Activated CD4-positive, alpha-beta T cell treated with anti-CD3 and anti-CD28 coated beads, Interleukin-2, amount 10 ng/mL, durations not matched to agents 7 days and 5 days (primary cell): ENCODE measurements at regions of chr1 and their contacts with region 1.

Region 1: GRCh38 chr1:204446370-204447111 is 34.9 kb upstream of the PPP1R15B start:
- DNase-seq: peak; percentile 84
- H3K4me3 Mint-ChIP-seq: no peak overlapping the region
- H3K27ac Mint-ChIP-seq: peak overlapping the region; percentile 76
- H3K4me1 Mint-ChIP-seq: peaks cover 43% of the 10 kb centered on the region
- H3K27me3 Mint-ChIP-seq: no peaks in the 10 kb centered on the region

Region 2: DNA sequence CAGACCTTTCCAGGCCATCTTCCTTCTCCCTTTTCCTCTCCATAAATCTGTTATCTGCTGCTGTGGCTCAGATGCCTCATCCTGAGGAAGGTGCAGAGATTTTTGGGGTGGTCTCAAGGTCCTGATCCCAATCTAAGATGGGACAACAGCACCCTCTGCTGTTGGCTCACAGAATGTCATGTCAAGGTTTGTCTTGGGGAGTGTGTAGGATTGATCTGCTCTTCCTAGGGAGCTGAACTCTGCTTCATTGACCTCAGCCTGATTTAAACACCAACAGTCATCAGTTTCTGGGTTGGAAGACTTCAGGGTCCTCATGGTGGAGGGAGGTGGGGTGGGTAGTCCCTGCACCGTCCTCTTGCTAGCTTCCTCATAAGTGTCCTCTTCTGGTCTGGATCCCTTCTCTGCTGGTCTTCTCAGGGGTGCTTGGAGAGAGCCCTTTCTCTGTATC is 744.4 kb before region 1 on chr1:
- CTCF ChIA-PET with region 1: no interaction called
- POLR2A ChIA-PET with region 1: no interaction called
- DNase-seq: peak; percentile 63
- H3K4me3 Mint-ChIP-seq: no peak overlapping the region
- H3K27ac Mint-ChIP-seq: peak overlapping the region; percentile 42
- H3K4me1 Mint-ChIP-seq: peaks cover 28% of the 10 kb centered on the region
- H3K27me3 Mint-ChIP-seq: no peaks in the 10 kb centered on the region

Region 3: GRCh38 chr1:204254031-204254661 is 192.4 kb before region 1 on chr1:
- CTCF ChIA-PET with region 1: no interaction called
- POLR2A ChIA-PET with region 1: no interaction called
- DNase-seq: no peak
- H3K4me3 Mint-ChIP-seq: no peak overlapping the region
- H3K27ac Mint-ChIP-seq: no peak overlapping the region
- H3K4me1 Mint-ChIP-seq: no peaks in the 10 kb centered on the region
- H3K27me3 Mint-ChIP-seq: no peaks in the 10 kb centered on the region

Region 4: DNA sequence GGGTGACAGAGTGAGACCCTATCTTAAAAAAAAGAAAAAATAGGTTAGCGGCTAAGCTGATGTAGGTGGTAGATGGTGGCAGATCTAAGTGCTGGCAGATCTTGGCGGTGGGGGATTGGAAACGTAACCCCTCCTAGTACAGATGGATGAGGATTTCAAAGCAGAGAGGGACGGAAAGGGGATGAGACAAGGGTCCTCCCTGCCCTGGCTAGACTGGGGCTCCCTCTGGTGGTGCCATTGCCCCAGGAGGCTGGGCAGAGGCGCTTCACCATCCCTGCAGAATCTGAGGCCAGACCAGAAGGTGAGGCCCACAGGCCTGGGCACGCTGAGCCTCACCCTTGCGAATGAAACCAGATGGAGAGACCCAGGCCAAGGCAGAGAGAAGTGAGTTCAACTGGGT is 79.8 kb before region 1 on chr1:
- CTCF ChIA-PET with region 1: no interaction called
- POLR2A ChIA-PET with region 1: no interaction called
- DNase-seq: no peak
- H3K4me3 Mint-ChIP-seq: no peak overlapping the region
- H3K27ac Mint-ChIP-seq: no peak overlapping the region
- H3K4me1 Mint-ChIP-seq: peaks cover 11% of the 10 kb centered on the region
- H3K27me3 Mint-ChIP-seq: peaks cover 2% of the 10 kb centered on the region

Region 5: GRCh38 chr1:204431310-204432165 is 15.0 kb before region 1 on chr1:
- CTCF ChIA-PET with region 1: interaction called, 12 read pairs
- POLR2A ChIA-PET with region 1: no interaction called
- DNase-seq: peak; percentile 83
- H3K4me3 Mint-ChIP-seq: no peak overlapping the region
- H3K27ac Mint-ChIP-seq: no peak overlapping the region
- H3K4me1 Mint-ChIP-seq: no peaks in the 10 kb centered on the region
- H3K27me3 Mint-ChIP-seq: no peaks in the 10 kb centered on the region

Region 6: GRCh38 chr1:204465546-204466415 is 19.2 kb after region 1 on chr1:
- CTCF ChIA-PET with region 1: interaction called, 102 read pairs
- POLR2A ChIA-PET with region 1: interaction called, 6 read pairs
- DNase-seq: no peak
- H3K4me3 Mint-ChIP-seq: no peak overlapping the region
- H3K27ac Mint-ChIP-seq: no peak overlapping the region
- H3K4me1 Mint-ChIP-seq: peaks cover 47% of the 10 kb centered on the region
- H3K27me3 Mint-ChIP-seq: no peaks in the 10 kb centered on the region

Region 7: DNA sequence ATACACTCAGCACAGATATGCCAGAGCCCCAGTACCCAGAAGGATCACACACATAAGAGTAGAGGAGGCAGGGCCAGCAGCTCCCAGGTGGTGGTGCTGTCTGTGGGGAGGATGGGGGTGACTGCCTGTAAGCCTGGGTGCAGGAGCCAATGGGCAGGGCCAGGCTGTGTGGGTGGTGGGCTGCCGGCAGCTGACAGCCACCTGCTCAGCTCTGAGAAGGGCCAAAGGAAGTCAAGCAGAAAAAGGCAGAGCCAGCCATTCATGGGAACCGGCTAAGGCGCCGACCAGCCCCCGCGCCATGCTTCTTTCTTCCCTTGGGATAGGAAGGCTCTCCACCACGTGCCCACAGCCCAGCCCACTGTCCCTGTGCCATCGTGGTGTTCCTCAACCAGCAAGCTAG is 34.0 kb after region 1 on chr1:
- CTCF ChIA-PET with region 1: interaction called, 17 read pairs
- POLR2A ChIA-PET with region 1: no interaction called
- DNase-seq: no peak
- H3K4me3 Mint-ChIP-seq: no peak overlapping the region
- H3K27ac Mint-ChIP-seq: no peak overlapping the region
- H3K4me1 Mint-ChIP-seq: peaks cover 26% of the 10 kb centered on the region
- H3K27me3 Mint-ChIP-seq: no peaks in the 10 kb centered on the region

Region 8: GRCh38 chr1:204487256-204487615 is 40.7 kb after region 1 on chr1:
- CTCF ChIA-PET with region 1: interaction called, 31 read pairs
- POLR2A ChIA-PET with region 1: interaction called, 4 read pairs
- DNase-seq: no peak
- H3K4me3 Mint-ChIP-seq: no peak overlapping the region
- H3K27ac Mint-ChIP-seq: no peak overlapping the region
- H3K4me1 Mint-ChIP-seq: peaks cover 22% of the 10 kb centered on the region
- H3K27me3 Mint-ChIP-seq: no peaks in the 10 kb centered on the region

Region 9: DNA sequence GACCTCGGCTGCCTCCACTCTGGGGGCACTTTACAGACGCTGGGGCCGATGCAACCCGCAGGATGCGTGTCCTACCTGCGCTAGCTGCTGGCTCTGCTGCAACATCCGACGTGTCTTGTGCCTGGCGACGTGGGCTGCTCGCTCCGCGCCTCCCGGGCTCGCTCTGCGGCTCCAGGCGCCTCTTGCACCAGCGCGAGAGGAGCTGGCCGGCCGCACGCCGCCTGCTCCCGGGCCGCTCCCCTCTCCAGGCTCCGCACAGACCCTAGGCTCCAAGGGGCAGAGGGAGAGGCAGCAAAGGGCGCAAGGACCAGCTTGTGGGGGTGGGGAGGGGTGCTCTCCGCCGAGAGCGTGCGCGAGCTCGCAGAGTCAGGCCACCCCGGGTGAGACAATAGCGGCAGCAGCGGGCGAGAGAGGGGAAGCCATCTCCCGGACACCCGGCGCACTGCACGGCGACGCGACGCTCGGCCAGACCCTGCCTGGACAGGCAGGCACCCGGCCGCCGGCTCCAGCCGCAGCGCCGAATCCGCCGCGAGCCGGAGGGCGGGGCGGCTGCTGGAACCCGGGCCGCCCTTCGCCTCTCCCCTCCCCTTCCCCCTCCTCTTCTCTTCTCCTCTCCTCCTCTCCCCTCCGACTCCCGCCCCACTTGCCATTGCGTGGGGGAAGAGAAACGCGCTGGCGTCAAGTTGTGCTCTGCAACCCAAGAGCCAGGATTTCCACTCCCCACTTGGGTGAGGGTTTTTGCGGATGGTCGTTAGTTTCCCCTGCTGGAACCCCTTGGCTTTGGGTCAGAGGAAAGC is 47.9 kb after region 1 on chr1 and contains the start of gene PIK3C2B:
- CTCF ChIA-PET with region 1: interaction called, 31 read pairs
- POLR2A ChIA-PET with region 1: interaction called, 4 read pairs
- DNase-seq: peak; percentile 76
- H3K4me3 Mint-ChIP-seq: peak within 1 kb of the TSS; percentile 88
- H3K27ac Mint-ChIP-seq: peak within 1 kb of the TSS; percentile 89
- H3K4me1 Mint-ChIP-seq: peaks cover 65% of the 10 kb centered on the region
- H3K27me3 Mint-ChIP-seq: no peaks in the 10 kb centered on the region
- total RNA-seq, gene PIK3C2B: 27.4 to 28.9 TPM

Region 10: DNA sequence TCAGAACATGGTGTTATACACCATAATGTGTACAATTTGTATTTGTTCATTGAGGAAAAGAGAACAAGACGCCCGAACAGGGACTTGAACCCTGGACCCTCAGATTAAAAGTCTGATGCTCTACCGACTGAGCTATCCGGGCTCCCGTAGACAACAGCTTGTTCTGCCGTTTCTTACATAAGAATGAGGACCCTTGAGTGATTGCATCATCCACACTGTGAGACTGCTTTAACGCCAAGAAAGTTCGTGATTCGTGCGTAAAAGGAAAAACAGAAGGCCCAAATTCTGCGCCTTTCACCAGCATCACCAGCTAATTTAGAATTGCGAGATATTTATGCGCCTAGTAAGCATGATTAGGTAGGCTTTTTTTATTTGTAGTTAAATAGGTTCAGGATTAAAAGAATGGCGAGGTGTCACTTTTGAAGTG is 60.4 kb after region 1 on chr1:
- CTCF ChIA-PET with region 1: interaction called, 106 read pairs
- POLR2A ChIA-PET with region 1: interaction called, 8 read pairs
- DNase-seq: peak; percentile 91
- H3K4me3 Mint-ChIP-seq: peak overlapping the region; percentile 87
- H3K27ac Mint-ChIP-seq: peak overlapping the region; percentile 98
- H3K4me1 Mint-ChIP-seq: peaks cover 45% of the 10 kb centered on the region
- H3K27me3 Mint-ChIP-seq: peaks cover 2% of the 10 kb centered on the region